CD4-positive, alpha-beta T cell (primary cell): ENCODE measurements at regions of chr18 and their contacts with region 1.

Region 1: DNA sequence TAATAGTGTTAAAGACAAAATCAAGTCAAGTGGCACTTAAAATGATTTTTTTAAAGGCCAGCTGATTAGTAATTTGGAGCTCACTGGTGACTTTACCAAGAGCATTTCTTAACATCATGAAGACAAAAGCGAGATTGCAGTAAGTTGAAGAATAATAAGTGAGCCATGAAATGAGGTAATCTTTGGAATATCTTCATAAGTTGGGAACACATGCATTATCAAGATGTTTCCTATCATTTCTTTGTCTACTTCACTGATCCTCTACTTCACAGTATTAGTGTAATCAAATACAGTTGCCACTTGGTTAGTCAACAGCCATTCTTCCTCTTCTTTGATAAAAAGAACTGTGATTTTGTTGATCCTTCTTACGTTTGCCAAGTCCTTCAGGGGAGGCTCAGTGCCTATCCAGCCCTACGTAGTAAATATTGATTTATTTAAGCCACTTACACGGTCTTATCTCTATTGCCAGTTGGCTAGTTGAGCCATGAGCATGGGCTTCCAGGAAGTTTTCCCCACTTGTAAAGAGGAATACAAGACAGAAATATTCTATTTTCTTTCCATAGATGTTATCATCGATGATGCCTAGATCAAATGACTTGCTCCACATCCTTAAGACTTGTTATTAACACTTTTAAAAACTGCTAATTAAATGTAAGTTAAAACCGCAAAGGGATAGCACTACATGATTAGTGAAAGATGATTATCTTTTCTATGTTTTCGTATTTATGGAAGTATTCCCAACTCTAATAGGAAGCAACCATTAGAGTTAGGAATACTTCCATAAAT is 46.1 kb downstream of the YES1 start:
- DNase-seq: no peak
- ATAC-seq: no peak
- H3K4me3 ChIP-seq: no peak overlapping the region
- H3K4me3 Mint-ChIP-seq: no peak overlapping the region
- H3K27ac ChIP-seq: no peak overlapping the region
- H3K27ac Mint-ChIP-seq: no peak overlapping the region
- H3K4me1 ChIP-seq: no peaks in the 10 kb centered on the region
- H3K4me1 Mint-ChIP-seq: peaks cover 27% of the 10 kb centered on the region
- H3K27me3 ChIP-seq: no peaks in the 10 kb centered on the region
- H3K27me3 Mint-ChIP-seq: no peaks in the 10 kb centered on the region
- CTCF ChIP-seq: no peak

Region 2: DNA sequence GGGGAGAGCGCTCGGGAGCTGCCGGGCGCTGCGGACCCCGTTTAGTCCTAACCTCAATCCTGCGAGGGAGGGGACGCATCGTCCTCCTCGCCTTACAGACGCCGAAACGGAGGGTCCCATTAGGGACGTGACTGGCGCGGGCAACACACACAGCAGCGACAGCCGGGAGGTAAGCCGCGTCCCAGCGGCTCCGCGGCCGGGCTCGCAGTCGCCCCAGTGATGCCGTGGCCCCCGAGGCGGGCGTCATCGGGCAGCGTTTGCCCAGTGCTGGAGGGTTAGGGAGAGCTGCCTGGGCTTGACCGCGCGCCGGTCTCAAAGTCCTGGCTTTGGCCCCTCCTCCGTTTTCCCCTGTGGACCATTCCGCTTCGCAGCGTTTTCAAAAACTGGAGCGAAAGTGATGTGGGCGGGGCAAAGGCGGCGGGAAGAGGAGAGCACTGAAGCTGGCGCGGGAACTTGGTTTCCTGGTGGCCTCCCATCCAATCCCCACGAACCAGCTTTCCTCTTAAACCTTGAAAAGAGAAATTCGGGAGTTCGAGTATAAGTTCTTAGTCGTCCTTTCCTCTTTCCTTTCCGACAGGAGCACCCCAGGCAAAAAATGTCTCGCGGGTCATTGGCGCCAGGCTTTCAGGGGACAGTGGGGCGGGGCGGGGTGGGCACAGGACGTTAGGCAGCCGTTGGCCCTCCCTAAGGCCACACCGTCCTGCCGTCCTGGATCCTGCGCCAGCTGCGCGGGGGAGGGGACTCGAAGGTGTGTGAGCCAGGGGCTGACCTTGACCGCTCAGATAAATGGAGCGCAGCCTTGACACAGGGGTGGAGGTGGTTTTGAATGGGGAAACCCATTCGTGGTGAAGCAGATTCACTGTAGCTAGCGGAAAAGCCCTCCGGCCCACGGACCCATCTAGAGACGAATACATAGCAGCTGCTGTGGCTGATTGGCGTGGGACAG is 107.7 kb before region 1 on chr18:
- CTCF ChIA-PET with region 1: no interaction called
- POLR2A ChIA-PET with region 1: no interaction called
- intact Hi-C with region 1: no loop called
- DNase-seq: peak in 9 of 14 experiments; percentile 13 to 65 (median 49)
- ATAC-seq: peak; percentile 43
- H3K4me3 ChIP-seq: peak overlapping the region; percentile 62
- H3K4me3 Mint-ChIP-seq: peak overlapping the region; percentile 87
- H3K27ac ChIP-seq: no peak overlapping the region
- H3K27ac Mint-ChIP-seq: no peak overlapping the region
- H3K4me1 ChIP-seq: peaks cover 22% of the 10 kb centered on the region
- H3K4me1 Mint-ChIP-seq: peaks cover 11% of the 10 kb centered on the region
- H3K27me3 ChIP-seq: peaks cover 3 to 13% of the 10 kb centered on the region in 2 experiments
- H3K27me3 Mint-ChIP-seq: peaks cover 51% of the 10 kb centered on the region
- CTCF ChIP-seq: no peak

Region 3: GRCh38 chr18:750456-750855 is 15.5 kb before region 1 on chr18:
- CTCF ChIA-PET with region 1: interaction called, 5 read pairs
- POLR2A ChIA-PET with region 1: no interaction called
- intact Hi-C with region 1: loop called in 1 of 2 experiments (anchors 2 kb)
- DNase-seq: no peak
- ATAC-seq: no peak
- H3K4me3 ChIP-seq: no peak overlapping the region
- H3K4me3 Mint-ChIP-seq: no peak overlapping the region
- H3K27ac ChIP-seq: no peak overlapping the region
- H3K27ac Mint-ChIP-seq: no peak overlapping the region
- H3K4me1 ChIP-seq: no peaks in the 10 kb centered on the region
- H3K4me1 Mint-ChIP-seq: no peaks in the 10 kb centered on the region
- H3K27me3 ChIP-seq: no peaks in the 10 kb centered on the region
- H3K27me3 Mint-ChIP-seq: no peaks in the 10 kb centered on the region
- CTCF ChIP-seq: no peak

Region 4: GRCh38 chr18:805008-805754 is 39.2 kb after region 1 on chr18:
- CTCF ChIA-PET with region 1: no interaction called
- POLR2A ChIA-PET with region 1: interaction called, 4 read pairs
- intact Hi-C with region 1: loop called in 1 of 2 experiments (anchors 5 kb)
- DNase-seq: peak in 1 of 14 experiments; percentile 22
- ATAC-seq: peak; percentile 46
- H3K4me3 ChIP-seq: no peak overlapping the region
- H3K4me3 Mint-ChIP-seq: peak overlapping the region; percentile 75
- H3K27ac ChIP-seq: no peak overlapping the region
- H3K27ac Mint-ChIP-seq: peak overlapping the region; percentile 25
- H3K4me1 ChIP-seq: peaks cover 10% of the 10 kb centered on the region
- H3K4me1 Mint-ChIP-seq: peaks cover 77% of the 10 kb centered on the region
- H3K27me3 ChIP-seq: no peaks in the 10 kb centered on the region
- H3K27me3 Mint-ChIP-seq: no peaks in the 10 kb centered on the region
- CTCF ChIP-seq: no peak

Region 5: GRCh38 chr18:864872-865273 is 98.9 kb after region 1 on chr18:
- CTCF ChIA-PET with region 1: no interaction called
- POLR2A ChIA-PET with region 1: no interaction called
- intact Hi-C with region 1: no loop called
- DNase-seq: peak; percentile 32 to 81 (median 45)
- ATAC-seq: peak; percentile 77
- H3K4me3 ChIP-seq: no peak overlapping the region
- H3K4me3 Mint-ChIP-seq: no peak overlapping the region
- H3K27ac ChIP-seq: no peak overlapping the region
- H3K27ac Mint-ChIP-seq: no peak overlapping the region
- H3K4me1 ChIP-seq: peaks cover 4% of the 10 kb centered on the region
- H3K4me1 Mint-ChIP-seq: peaks cover 7% of the 10 kb centered on the region
- H3K27me3 ChIP-seq: peaks cover 3 to 10% of the 10 kb centered on the region in 2 experiments
- H3K27me3 Mint-ChIP-seq: peaks cover 55% of the 10 kb centered on the region
- CTCF ChIP-seq: peak; percentile 75

Region 6: GRCh38 chr18:1213126-1213525 is 447.2 kb after region 1 on chr18:
- CTCF ChIA-PET with region 1: no interaction called
- POLR2A ChIA-PET with region 1: no interaction called
- intact Hi-C with region 1: no loop called
- DNase-seq: no peak
- ATAC-seq: no peak
- H3K4me3 ChIP-seq: no peak overlapping the region
- H3K4me3 Mint-ChIP-seq: no peak overlapping the region
- H3K27ac ChIP-seq: no peak overlapping the region
- H3K27ac Mint-ChIP-seq: no peak overlapping the region
- H3K4me1 ChIP-seq: no peaks in the 10 kb centered on the region
- H3K4me1 Mint-ChIP-seq: no peaks in the 10 kb centered on the region
- H3K27me3 ChIP-seq: no peaks in the 10 kb centered on the region
- H3K27me3 Mint-ChIP-seq: no peaks in the 10 kb centered on the region
- CTCF ChIP-seq: no peak